ENCODE measurements at regions of chr9 and their contacts with region 1.

Region 1: GRCh38 chr9:68685770-68686169 is 19.3 kb upstream of the PIP5K1B start:
- DNase-seq: no peak
- H3K4me3 Mint-ChIP-seq: no peak overlapping the region
- H3K27ac Mint-ChIP-seq: no peak overlapping the region
- H3K4me1 Mint-ChIP-seq: peaks cover 36% of the 10 kb centered on the region
- H3K27me3 Mint-ChIP-seq: peaks cover 12% of the 10 kb centered on the region

Region 2: DNA sequence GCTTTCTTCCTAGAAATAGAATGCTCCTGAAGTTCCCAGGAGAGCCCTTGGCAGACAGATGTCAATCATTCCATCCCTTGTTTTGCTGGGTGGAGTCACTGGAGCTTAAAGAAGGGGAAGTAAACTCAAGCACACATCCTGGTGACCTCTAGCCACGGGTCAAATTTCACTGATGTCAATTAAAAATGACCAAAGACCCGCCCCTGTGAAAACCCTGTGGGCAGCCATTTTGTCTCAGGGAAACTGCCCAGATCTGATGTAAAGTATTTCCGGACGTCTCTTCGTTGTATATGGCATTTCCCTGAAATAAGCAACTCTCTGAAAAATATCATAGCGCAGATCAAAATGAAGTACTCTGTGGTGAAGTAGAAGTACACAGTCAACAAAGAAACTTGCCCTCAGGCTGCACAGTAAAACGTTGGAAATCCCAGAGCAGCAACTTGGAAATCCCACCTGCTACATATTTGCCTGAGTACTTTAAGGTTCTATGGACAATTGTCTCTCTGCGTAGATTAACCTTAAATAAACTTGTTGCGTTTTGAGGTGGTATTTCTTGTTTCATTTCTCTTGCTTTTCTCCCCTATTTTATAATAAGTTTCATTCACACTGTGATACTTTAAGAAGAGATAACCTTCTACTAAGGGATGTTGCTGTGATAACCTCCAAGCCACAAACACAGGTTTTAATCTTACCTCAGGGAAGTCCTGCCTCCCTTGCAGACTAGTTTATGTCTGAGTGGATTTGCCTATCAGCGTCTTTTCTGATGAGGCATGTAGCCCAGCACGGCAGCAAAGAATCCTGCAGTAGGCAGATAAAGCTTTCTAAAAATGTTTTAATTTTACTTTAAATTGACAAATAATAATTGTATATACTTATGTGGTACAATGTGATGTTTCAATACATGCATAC is 41.6 kb before region 1 on chr9:
- intact Hi-C with region 1: loop called (anchors 5 kb)
- DNase-seq: no peak
- H3K4me3 Mint-ChIP-seq: no peak overlapping the region
- H3K27ac Mint-ChIP-seq: peak overlapping the region; percentile 71
- H3K4me1 Mint-ChIP-seq: peaks cover 47% of the 10 kb centered on the region
- H3K27me3 Mint-ChIP-seq: no peaks in the 10 kb centered on the region

Region 3: DNA sequence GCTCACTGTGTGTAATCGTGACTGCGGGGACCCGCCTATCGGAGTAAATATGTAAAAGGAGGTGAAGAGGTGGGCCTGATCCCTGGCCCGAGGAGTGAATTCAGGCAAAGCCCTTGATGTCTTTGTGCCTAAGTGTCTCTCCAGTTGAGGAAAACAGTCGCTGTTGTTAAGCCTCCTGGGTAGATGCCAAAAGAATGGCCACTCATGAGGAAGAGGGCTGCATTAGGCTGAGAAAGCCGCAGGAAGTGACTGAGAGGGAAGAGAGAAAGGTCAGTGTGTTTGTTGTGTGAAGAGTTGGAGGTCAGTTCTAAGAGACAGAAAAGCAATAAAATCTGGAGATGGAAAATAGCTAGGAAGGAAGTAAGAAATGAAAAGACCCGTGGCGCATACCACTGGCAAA is 16.6 kb before region 1 on chr9:
- intact Hi-C with region 1: no loop called
- DNase-seq: no peak
- H3K4me3 Mint-ChIP-seq: no peak overlapping the region
- H3K27ac Mint-ChIP-seq: no peak overlapping the region
- H3K4me1 Mint-ChIP-seq: peaks cover 22% of the 10 kb centered on the region
- H3K27me3 Mint-ChIP-seq: no peaks in the 10 kb centered on the region